Activated CD4-positive, alpha-beta T cell treated with anti-CD3 and anti-CD28 coated beads for 36 hours (primary cell): ENCODE measurements at regions of chr12 and their contacts with region 1.

Region 1: DNA sequence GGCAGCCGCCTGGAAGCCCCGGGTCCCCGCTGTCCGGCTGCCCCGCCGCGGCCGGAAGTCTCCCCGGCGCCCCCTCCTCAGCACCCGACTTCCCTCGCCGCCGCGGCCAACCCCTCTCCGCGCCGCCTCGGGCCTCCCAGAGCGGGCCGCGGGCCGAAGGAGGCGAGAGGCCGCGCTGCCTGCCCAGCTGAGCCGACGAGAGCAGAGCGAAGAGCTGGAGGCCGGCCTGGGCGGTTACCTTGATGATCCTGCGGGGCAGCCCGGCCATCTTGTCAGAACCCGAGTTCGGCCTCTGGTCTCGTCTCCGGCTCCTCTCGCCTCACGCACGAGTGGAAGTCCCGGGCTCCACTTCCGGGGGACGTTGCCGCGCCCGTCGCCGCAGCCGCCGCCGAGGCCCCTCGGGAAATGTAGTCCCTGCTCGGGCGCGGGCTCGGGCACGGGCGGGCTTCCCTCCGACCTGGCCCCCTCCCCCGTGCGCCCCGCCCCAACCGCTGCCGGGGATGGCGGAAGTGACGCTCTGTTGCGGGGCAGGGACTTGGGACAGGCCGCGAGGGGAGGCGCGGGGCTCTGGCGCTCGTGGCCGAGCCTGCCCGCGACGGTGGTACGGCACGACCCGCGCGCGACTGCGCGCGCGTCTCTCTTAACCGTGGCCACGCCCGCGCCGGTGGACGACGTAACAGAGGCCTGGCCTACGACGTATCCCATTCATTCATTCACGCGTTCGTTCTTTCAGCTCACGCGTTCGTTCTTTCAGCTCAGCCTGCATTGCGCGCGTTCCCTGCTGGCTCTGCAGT is at the start of gene UBE2N:
- DNase-seq: peak; percentile 98
- ATAC-seq: peak; percentile 84
- H3K4me3 Mint-ChIP-seq: peak within 1 kb of the TSS; percentile 99
- H3K27ac Mint-ChIP-seq: peak within 1 kb of the TSS; percentile 99
- H3K4me1 Mint-ChIP-seq: peaks cover 48% of the 10 kb centered on the region
- H3K27me3 Mint-ChIP-seq: no peaks in the 10 kb centered on the region
- total RNA-seq, gene UBE2N: 186 to 279 TPM

Region 2: DNA sequence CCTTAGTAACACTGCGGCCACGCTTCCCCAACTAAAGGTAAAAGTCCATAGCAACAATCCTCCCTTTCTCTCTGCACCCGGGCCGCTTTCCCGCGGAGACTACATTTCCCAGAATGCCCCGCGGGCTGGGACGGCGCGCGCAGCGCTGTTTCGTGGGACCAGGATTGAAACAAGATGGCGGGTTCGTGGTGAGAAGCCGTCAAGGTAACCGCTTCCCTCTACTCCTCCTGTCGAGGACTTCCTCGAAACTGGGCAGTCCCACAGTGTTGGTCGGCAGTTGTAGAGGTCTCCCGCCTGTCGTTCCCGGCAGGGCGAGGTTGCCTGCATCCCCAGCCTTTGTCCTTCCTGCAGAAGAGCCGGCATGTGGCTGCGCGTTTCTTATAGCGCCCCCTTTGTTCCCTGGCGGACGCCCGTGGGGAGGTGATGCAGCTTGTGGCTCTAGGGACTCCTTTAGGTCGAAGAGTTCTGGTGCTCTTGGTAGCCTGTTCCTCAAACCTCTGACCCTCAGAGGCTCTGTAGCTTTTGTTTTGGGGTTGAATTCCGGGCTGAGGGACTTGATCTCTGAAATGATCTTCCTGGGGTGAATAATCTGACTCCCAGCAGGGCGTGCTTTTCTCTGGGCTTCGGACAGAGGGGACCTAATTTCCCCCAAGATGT is 25.7 kb after region 1 on chr12 and contains the start of gene MRPL42:
- CTCF ChIA-PET with region 1: interaction called, 4 read pairs
- POLR2A ChIA-PET with region 1: interaction called, 7 read pairs
- intact Hi-C with region 1: loop called (anchors 1 kb)
- DNase-seq: peak; percentile 95
- ATAC-seq: peak; percentile 91
- H3K4me3 Mint-ChIP-seq: peak within 1 kb of the TSS; percentile 95
- H3K27ac Mint-ChIP-seq: peak within 1 kb of the TSS; percentile 93
- H3K4me1 Mint-ChIP-seq: peaks cover 29% of the 10 kb centered on the region
- H3K27me3 Mint-ChIP-seq: no peaks in the 10 kb centered on the region
- total RNA-seq, gene MRPL42: 78.7 to 98.3 TPM